ENCODE measurements at regions of chr2 and their contacts with region 1.

Region 1: GRCh38 chr2:85538486-85539360 is at the start of gene MAT2A:
- DNase-seq: peak; percentile 92 to 97 (median 93)
- H3K4me3 ChIP-seq: peak within 1 kb of the TSS; percentile 47 to 98 (median 72)
- H3K27ac ChIP-seq: peak within 1 kb of the TSS; percentile 94 to 100 (median 99)
- H3K4me1 ChIP-seq: peaks cover 20 to 55% of the 10 kb centered on the region in 2 donors
- H3K27me3 ChIP-seq: no peaks in the 10 kb centered on the region
- CTCF ChIP-seq: peak; percentile 50 to 87 (median 78)
- POLR2A ChIP-seq: peak; percentile 99 to 100
- total RNA-seq, gene MAT2A: 87.3 to 429 (median 175) TPM

Region 2: GRCh38 chr2:85437488-85438284 is 101.0 kb before region 1 on chr2:
- intact Hi-C with region 1: loop called (anchors 5 kb)
- DNase-seq: peak; percentile 87 to 95 (median 92)
- H3K4me3 ChIP-seq: peak overlapping the region in 1 of 4 donors; percentile 63
- H3K27ac ChIP-seq: peak overlapping the region; percentile 80 to 100 (median 88)
- H3K4me1 ChIP-seq: peaks cover 35 to 39% of the 10 kb centered on the region in 2 donors
- H3K27me3 ChIP-seq: no peaks in the 10 kb centered on the region
- CTCF ChIP-seq: no peak
- POLR2A ChIP-seq: peak; percentile 81 to 96

Region 3: DNA sequence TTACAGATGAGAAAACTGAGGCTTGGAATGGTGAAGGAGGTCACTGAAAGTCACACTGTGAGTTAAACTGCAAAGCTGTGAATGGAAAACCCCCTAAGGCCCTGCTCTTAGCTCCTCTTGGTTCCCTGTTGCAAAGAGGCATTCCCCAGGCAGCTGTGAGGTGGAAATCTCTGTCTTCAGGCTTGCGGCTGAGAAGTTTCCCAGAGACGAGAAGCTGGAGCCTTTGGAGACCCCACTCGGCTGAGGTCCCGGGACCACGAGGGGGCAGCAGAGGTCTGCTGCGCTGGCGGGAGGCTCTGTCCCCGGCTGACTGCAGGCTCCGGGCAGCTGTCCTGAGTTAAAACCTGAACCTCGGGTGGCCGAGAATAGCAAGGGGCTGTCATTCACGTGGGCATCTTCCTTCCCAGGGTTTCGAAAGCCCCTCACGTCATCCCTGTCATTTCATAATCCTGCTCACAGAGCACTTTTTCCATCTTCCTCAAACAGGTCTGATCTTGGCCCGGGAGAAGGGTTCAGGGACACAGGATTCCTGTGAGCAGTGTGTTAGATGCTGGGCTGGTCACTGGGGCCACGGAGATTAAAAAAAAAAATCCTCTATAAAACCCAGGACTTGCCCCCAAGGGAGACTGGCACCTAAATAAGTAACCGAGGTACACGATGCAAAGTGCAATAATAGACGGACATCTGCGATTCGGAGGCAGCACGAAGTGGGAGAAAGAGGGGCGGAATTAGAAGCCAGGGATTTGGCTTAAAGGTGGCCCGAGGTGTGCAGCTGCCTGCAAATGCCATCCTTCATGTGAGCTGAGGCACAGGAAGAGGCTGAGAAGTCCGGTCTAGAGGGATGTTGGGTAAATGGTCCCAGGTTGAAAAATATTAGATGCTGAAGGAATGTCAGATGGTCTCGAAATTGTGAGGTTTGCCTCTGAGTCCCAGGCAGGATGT is 190.4 kb after region 1 on chr2:
- intact Hi-C with region 1: no loop called
- DNase-seq: peak; percentile 85 to 94 (median 90)
- H3K4me3 ChIP-seq: no peak overlapping the region
- H3K27ac ChIP-seq: peak overlapping the region in 1 of 5 donors; percentile 45
- H3K4me1 ChIP-seq: peaks cover 0 to 18% of the 10 kb centered on the region in 2 donors
- H3K27me3 ChIP-seq: no peaks in the 10 kb centered on the region
- CTCF ChIP-seq: peak; percentile 86 to 97 (median 92)
- POLR2A ChIP-seq: no peak

Measured in adrenal gland (tissue), 19 donors.